Ovary (tissue), 10 donors: ENCODE measurements at regions of chr20 and their contacts with region 1.

Region 1: DNA sequence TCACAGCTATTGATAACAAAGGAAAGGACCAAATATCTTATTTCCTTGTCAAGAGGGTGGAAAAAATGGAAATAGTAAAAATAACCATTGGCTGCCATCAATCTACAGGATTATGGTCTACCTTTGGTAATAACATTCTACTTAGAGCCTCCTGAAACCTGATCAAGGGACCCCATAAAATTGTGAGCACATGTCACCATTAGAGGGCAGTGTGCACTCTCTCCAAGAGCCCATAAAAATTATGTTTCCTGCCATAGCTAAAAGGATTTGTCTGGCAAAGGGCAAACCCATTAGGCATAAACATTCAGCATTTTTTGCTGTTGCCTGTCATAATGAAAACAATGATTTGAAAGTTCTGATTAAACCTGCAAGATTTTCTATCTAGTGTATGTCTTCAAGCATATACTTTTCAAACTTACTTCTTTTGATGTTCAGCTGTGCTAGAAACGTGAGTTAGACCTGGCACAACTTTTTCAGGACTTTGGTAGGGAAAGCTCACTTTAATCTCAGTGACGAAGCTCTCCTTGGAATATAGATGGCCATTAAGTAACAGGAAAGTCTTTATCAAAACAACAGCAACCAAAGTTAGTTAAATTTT is 120.7 kb upstream of the ZFP64 start:
- DNase-seq: peak in 3 of 5 donors; percentile 17 to 27 (median 22)
- H3K4me3 ChIP-seq: no peak overlapping the region
- H3K27ac ChIP-seq: no peak overlapping the region
- H3K4me1 ChIP-seq: peaks cover 2% of the 10 kb centered on the region
- H3K27me3 ChIP-seq: no peaks in the 10 kb centered on the region
- CTCF ChIP-seq: peak in 2 of 3 donors; percentile 38 to 40
- EP300 ChIP-seq: no peak
- POLR2A ChIP-seq: no peak

Region 2: GRCh38 chr20:53216856-53217576 is 904.8 kb after region 1 on chr20:
- intact Hi-C with region 1: loop called in 1 of 4 experiments (anchors 10 kb)
- DNase-seq: peak; percentile 70 to 86 (median 82)
- H3K4me3 ChIP-seq: no peak overlapping the region
- H3K27ac ChIP-seq: no peak overlapping the region
- H3K4me1 ChIP-seq: no peaks in the 10 kb centered on the region
- H3K27me3 ChIP-seq: no peaks in the 10 kb centered on the region
- CTCF ChIP-seq: peak; percentile 46 to 80 (median 80)
- EP300 ChIP-seq: no peak
- POLR2A ChIP-seq: no peak

Region 3: DNA sequence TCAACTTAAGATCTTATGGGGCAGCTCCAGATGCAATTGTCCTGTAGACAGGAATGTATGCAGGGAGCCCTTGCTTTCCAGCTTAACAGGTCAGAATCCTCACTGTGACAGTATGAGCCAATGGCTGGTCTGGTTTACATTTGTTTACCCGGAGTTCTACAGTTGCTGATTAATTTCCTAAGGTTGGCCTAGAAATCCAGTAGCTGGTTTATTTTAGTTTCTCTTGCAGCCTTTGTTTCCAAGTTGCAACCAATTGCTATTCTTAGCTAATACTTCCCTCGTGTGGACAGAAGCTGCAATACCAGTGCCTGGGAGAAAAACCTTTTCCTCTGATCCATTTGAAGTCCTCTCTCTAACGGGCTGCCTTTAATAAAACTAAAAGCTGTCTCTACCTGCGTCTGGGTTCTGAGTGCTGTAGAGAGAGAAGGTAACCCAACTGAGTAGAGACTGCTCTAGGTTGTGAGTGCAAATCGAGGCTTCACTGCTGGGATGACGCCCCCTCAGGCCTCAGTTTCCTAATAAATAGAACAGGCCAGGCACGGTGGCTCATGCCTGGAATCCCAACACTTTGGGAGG is 1235.5 kb after region 1 on chr20:
- intact Hi-C with region 1: loop called in 2 of 4 experiments (anchors 5 kb)
- DNase-seq: peak in 4 of 5 donors; percentile 26 to 57 (median 32)
- H3K4me3 ChIP-seq: no peak overlapping the region
- H3K27ac ChIP-seq: no peak overlapping the region
- H3K4me1 ChIP-seq: peaks cover 2% of the 10 kb centered on the region
- H3K27me3 ChIP-seq: no peaks in the 10 kb centered on the region
- CTCF ChIP-seq: peak; percentile 56 to 78 (median 66)
- EP300 ChIP-seq: no peak
- POLR2A ChIP-seq: no peak